ENCODE measurements at regions of chr17 and their contacts with region 1.

Region 1: GRCh38 chr17:53942436-53942835 is 119.7 kb downstream of the KIF2B start:
- DNase-seq: no peak
- ATAC-seq: no peak
- H3K4me3 ChIP-seq: no peak overlapping the region
- H3K4me3 Mint-ChIP-seq: no peak overlapping the region
- H3K27ac ChIP-seq: no peak overlapping the region
- H3K27ac Mint-ChIP-seq: no peak overlapping the region
- H3K4me1 ChIP-seq: no peaks in the 10 kb centered on the region
- H3K4me1 Mint-ChIP-seq: no peaks in the 10 kb centered on the region
- H3K27me3 ChIP-seq: no peaks in the 10 kb centered on the region
- H3K27me3 Mint-ChIP-seq: no peaks in the 10 kb centered on the region
- CTCF ChIP-seq: no peak

Region 2: GRCh38 chr17:52648995-52649394 is 1293.4 kb before region 1 on chr17:
- CTCF ChIA-PET with region 1: no interaction called
- POLR2A ChIA-PET with region 1: no interaction called
- intact Hi-C with region 1: loop called in 1 of 2 experiments (anchors 5 kb)
- DNase-seq: no peak
- ATAC-seq: no peak
- H3K4me3 ChIP-seq: no peak overlapping the region
- H3K4me3 Mint-ChIP-seq: no peak overlapping the region
- H3K27ac ChIP-seq: no peak overlapping the region
- H3K27ac Mint-ChIP-seq: no peak overlapping the region
- H3K4me1 ChIP-seq: no peaks in the 10 kb centered on the region
- H3K4me1 Mint-ChIP-seq: no peaks in the 10 kb centered on the region
- H3K27me3 ChIP-seq: no peaks in the 10 kb centered on the region
- H3K27me3 Mint-ChIP-seq: no peaks in the 10 kb centered on the region
- CTCF ChIP-seq: no peak

Region 3: GRCh38 chr17:53894591-53894990 is 47.8 kb before region 1 on chr17:
- CTCF ChIA-PET with region 1: no interaction called
- POLR2A ChIA-PET with region 1: no interaction called
- intact Hi-C with region 1: no loop called
- DNase-seq: no peak
- ATAC-seq: no peak
- H3K4me3 ChIP-seq: no peak overlapping the region
- H3K4me3 Mint-ChIP-seq: no peak overlapping the region
- H3K27ac ChIP-seq: no peak overlapping the region
- H3K27ac Mint-ChIP-seq: no peak overlapping the region
- H3K4me1 ChIP-seq: no peaks in the 10 kb centered on the region
- H3K4me1 Mint-ChIP-seq: no peaks in the 10 kb centered on the region
- H3K27me3 ChIP-seq: no peaks in the 10 kb centered on the region
- H3K27me3 Mint-ChIP-seq: no peaks in the 10 kb centered on the region
- CTCF ChIP-seq: no peak

Region 4: DNA sequence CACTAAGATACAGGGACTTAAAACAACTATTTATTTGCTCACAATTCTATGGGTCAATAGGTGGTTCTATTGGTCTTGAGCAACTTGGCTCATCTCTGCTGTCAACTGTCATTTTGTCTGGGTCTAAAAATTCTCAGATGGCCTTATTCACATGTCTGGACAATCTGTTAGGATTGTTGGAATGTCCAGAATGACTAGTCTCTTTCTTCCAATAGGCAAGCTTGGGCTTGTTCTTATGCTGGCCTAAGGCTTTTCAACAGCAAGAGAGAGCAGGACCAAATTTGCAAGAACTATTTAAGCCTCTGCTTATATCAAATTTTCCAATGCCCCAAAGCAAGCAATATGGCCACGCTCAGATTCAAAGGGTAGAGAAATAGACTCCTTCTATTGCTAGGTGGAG is 121.2 kb after region 1 on chr17:
- CTCF ChIA-PET with region 1: no interaction called
- POLR2A ChIA-PET with region 1: no interaction called
- intact Hi-C with region 1: no loop called
- DNase-seq: no peak
- ATAC-seq: no peak
- H3K4me3 ChIP-seq: no peak overlapping the region
- H3K4me3 Mint-ChIP-seq: no peak overlapping the region
- H3K27ac ChIP-seq: no peak overlapping the region
- H3K27ac Mint-ChIP-seq: no peak overlapping the region
- H3K4me1 ChIP-seq: no peaks in the 10 kb centered on the region
- H3K4me1 Mint-ChIP-seq: no peaks in the 10 kb centered on the region
- H3K27me3 ChIP-seq: no peaks in the 10 kb centered on the region
- H3K27me3 Mint-ChIP-seq: no peaks in the 10 kb centered on the region
- CTCF ChIP-seq: no peak